Activated CD4-positive, alpha-beta T cell treated with anti-CD3 and anti-CD28 coated beads, Interleukin-2, amount 10 ng/mL, durations not matched to agents 24 days and 14 days (primary cell): ENCODE measurements at regions of chr9 and their contacts with region 1.

Region 1: DNA sequence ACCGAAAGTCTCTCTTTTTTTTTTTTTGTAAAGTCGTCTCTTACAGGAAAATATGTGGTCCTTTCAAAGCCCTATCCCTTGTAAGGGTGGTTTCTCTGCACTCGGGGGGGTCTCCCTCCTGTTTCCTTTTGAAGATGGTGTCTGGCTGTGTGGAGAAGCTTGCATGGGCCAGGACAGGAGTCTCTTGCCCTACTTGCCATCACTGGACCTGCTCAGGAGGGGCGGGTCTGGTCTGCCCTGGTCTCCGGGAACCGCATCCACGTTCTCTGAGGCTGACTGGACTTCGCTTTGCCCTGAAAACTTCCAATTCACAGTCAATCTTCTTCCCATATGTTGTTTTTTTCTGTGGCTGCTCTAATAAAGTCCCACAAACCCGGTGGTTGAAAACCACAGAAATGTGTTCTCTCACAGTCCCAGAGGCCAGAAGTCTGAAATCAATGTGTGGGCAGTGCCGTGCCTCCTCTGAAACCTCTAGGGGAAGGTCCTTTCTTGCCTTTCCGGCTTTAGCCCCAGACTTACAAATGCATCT is 92.9 kb upstream of the IER5L start:
- DNase-seq: peak; percentile 70
- H3K4me3 Mint-ChIP-seq: peak overlapping the region; percentile 60
- H3K27ac Mint-ChIP-seq: peak overlapping the region; percentile 71
- H3K4me1 Mint-ChIP-seq: peaks cover 28% of the 10 kb centered on the region
- H3K27me3 Mint-ChIP-seq: peaks cover 19% of the 10 kb centered on the region

Region 2: GRCh38 chr9:129258124-129258822 is 12.7 kb before region 1 on chr9:
- intact Hi-C with region 1: loop called (anchors 1 kb)
- DNase-seq: peak; percentile 97
- H3K4me3 Mint-ChIP-seq: peak overlapping the region; percentile 82
- H3K27ac Mint-ChIP-seq: no peak overlapping the region
- H3K4me1 Mint-ChIP-seq: peaks cover 34% of the 10 kb centered on the region
- H3K27me3 Mint-ChIP-seq: peaks cover 42% of the 10 kb centered on the region

Region 3: GRCh38 chr9:129320575-129321263 is 49.8 kb after region 1 on chr9:
- intact Hi-C with region 1: loop called (anchors 5 kb)
- DNase-seq: peak; percentile 87
- H3K4me3 Mint-ChIP-seq: peak overlapping the region; percentile 81
- H3K27ac Mint-ChIP-seq: peak overlapping the region; percentile 89
- H3K4me1 Mint-ChIP-seq: peaks cover 15% of the 10 kb centered on the region
- H3K27me3 Mint-ChIP-seq: peaks cover 1% of the 10 kb centered on the region

Region 4: DNA sequence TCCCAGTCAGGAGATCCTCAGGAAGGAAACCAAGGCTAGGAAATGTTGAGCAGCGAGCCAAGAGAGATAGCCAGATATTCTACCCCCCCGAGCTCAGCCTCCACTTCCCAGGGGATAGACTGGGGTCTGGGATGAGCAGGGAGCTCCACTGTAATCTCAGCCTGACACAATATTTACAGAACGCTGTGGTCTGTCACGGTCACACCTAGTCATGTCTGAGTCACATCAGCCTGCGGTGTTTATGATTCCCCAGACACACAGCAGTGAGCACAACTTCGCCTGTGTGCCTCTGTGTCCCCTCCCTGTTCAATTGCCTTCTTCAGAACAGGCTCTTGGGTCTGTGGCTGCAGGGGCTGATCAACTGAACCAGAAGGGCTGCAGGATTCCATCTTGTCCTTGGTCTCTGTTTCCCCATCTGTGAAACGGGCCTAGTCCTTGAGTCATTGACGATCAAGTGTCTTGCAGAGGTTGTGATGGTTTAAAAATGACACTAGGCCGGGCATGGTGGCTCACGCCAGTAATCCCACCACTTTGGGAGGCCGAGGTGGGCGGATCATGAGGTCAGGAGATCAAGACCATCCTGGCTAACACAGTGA is 385.9 kb after region 1 on chr9:
- intact Hi-C with region 1: no loop called
- DNase-seq: no peak
- H3K4me3 Mint-ChIP-seq: no peak overlapping the region
- H3K27ac Mint-ChIP-seq: no peak overlapping the region
- H3K4me1 Mint-ChIP-seq: no peaks in the 10 kb centered on the region
- H3K27me3 Mint-ChIP-seq: peaks cover 8% of the 10 kb centered on the region

Region 5: GRCh38 chr9:129868916-129869486 is 598.0 kb after region 1 on chr9:
- intact Hi-C with region 1: no loop called
- DNase-seq: peak; percentile 96
- H3K4me3 Mint-ChIP-seq: peak overlapping the region; percentile 61
- H3K27ac Mint-ChIP-seq: peak overlapping the region; percentile 92
- H3K4me1 Mint-ChIP-seq: peaks cover 56% of the 10 kb centered on the region
- H3K27me3 Mint-ChIP-seq: no peaks in the 10 kb centered on the region